ENCODE measurements at regions of chr9 and their contacts with region 1.

Region 1: DNA sequence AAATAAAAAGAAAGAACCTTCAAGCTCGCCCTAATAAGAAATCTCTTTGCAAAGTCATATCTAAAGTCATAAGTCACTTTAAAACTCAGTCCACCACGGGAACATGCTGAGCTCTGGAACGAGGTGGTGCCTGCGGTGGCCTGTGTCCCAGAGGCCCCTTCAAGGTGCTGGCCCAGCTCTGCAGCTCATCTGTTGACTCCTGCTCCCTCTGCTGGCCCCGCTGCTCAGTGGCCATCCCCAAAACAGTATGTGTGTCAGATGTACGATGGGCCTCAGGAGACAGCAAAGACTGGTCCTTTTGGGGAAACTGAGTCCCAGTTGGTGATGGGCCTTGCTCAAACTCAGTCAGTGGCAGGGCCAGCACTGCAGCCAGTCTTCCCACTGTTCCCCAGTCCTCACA is 22.8 kb upstream of the FOXB2 start:
- DNase-seq: peak in 1 of 2 experiments; percentile 68
- H3K4me3 ChIP-seq: no peak overlapping the region
- H3K27ac ChIP-seq: no peak overlapping the region
- H3K4me1 ChIP-seq: peaks cover 0 to 5% (median 0%) of the 10 kb centered on the region in 4 experiments; a peak in 1 of 7 replicates
- H3K27me3 ChIP-seq: no peaks in the 10 kb centered on the region
- CTCF ChIP-seq: peak; percentile 86 to 94 (median 94)
- EP300 ChIP-seq: no peak
- POLR2A ChIP-seq: no peak
- RAD21 ChIP-seq: peak; percentile 89 to 90

Region 2: GRCh38 chr9:76756268-76756640 is 240.4 kb before region 1 on chr9:
- CTCF ChIA-PET with region 1: interaction called, 35 read pairs
- POLR2A ChIA-PET with region 1: no interaction called
- DNase-seq: peak; percentile 25 to 60
- H3K4me3 ChIP-seq: no peak overlapping the region
- H3K27ac ChIP-seq: no peak overlapping the region
- H3K4me1 ChIP-seq: peaks cover 0 to 5% (median 2%) of the 10 kb centered on the region in 4 experiments; a peak in 4 of 7 replicates
- H3K27me3 ChIP-seq: no peaks in the 10 kb centered on the region
- CTCF ChIP-seq: peak; percentile 51 to 63 (median 56)
- EP300 ChIP-seq: no peak
- POLR2A ChIP-seq: no peak
- RAD21 ChIP-seq: peak; percentile 72 to 80

Region 3: GRCh38 chr9:76761448-76761847 is 235.3 kb before region 1 on chr9:
- CTCF ChIA-PET with region 1: interaction called, 35 read pairs
- POLR2A ChIA-PET with region 1: no interaction called
- DNase-seq: no peak
- H3K4me3 ChIP-seq: no peak overlapping the region
- H3K27ac ChIP-seq: no peak overlapping the region
- H3K4me1 ChIP-seq: peaks cover 0 to under 1% (median 0%) of the 10 kb centered on the region in 4 experiments; a peak in 1 of 7 replicates
- H3K27me3 ChIP-seq: no peaks in the 10 kb centered on the region
- CTCF ChIP-seq: no peak
- EP300 ChIP-seq: no peak
- POLR2A ChIP-seq: no peak
- RAD21 ChIP-seq: peak; percentile 14 to 22; a peak in 2 of 4 replicates

Region 4: GRCh38 chr9:77011973-77012821 is 15.5 kb after region 1 on chr9:
- CTCF ChIA-PET with region 1: interaction called, 40 read pairs
- POLR2A ChIA-PET with region 1: no interaction called
- DNase-seq: peak in 1 of 2 experiments; percentile 98
- H3K4me3 ChIP-seq: peak overlapping the region; percentile 20 to 60 (median 42); a peak in 5 of 8 replicates
- H3K27ac ChIP-seq: no peak overlapping the region
- H3K4me1 ChIP-seq: peaks cover 9 to 30% (median 25%) of the 10 kb centered on the region in 4 experiments
- H3K27me3 ChIP-seq: peaks cover 46 to 71% (median 64%) of the 10 kb centered on the region in 4 experiments
- CTCF ChIP-seq: peak; percentile 89 to 91 (median 91)
- EP300 ChIP-seq: no peak
- POLR2A ChIP-seq: no peak
- RAD21 ChIP-seq: peak; percentile 69 to 79